ENCODE measurements at regions of chr2 and their contacts with region 1.

Region 1: GRCh38 chr2:62195421-62196277 is at the start of gene B3GNT2:
- DNase-seq: peak; percentile 89
- H3K4me3 ChIP-seq: peak within 1 kb of the TSS; percentile 83
- H3K27ac ChIP-seq: peak within 1 kb of the TSS; percentile 93
- H3K4me1 ChIP-seq: peaks cover 3% of the 10 kb centered on the region
- H3K27me3 ChIP-seq: no peaks in the 10 kb centered on the region
- CTCF ChIP-seq: no peak
- total RNA-seq, gene B3GNT2: 20.1 to 55.7 TPM

Region 2: DNA sequence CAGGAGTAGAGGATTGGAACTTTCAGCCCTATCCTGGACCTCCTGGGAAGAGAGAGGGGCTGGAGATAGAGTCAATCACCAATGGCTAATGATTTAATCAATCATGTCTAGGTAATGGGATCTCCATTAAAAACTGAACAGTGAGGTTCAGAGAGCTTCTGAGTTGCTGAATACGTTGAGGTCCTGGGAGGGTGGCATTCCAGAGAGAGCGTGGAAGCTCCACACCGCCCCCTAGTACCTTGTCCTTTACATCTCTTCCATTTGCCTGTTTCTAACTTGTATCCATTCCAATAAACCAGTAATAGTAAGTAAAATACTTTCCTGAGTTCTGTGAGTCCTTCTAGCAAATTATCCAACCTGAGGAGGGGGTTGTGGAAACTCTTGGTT is 102.0 kb after region 1 on chr2:
- intact Hi-C with region 1: loop called (anchors 5 kb)
- DNase-seq: no peak
- H3K4me3 ChIP-seq: no peak overlapping the region
- H3K27ac ChIP-seq: no peak overlapping the region
- H3K4me1 ChIP-seq: peaks cover 12% of the 10 kb centered on the region
- H3K27me3 ChIP-seq: no peaks in the 10 kb centered on the region
- CTCF ChIP-seq: no peak

Region 3: DNA sequence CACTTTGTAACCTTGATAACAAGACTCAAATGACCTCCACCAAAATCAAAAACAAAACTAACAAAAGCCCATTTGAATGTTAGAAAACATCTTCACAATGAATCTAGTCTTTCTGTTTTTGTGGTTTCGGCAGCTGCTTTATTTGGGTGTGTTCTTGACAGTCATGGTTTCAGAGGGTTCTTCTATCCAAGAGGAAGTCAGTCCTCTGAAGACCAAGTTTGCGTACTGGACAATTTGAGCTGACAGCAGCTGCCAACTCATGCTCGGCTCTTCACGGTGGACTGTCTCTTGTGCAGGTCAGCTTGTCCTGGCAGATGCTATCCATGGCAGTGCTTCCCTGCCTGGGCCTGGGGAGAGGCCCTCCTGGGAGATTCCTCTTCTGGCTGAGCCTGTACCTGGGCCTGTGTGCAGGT is 219.4 kb after region 1 on chr2:
- intact Hi-C with region 1: loop called (anchors 10 kb)
- DNase-seq: no peak
- H3K4me3 ChIP-seq: no peak overlapping the region
- H3K27ac ChIP-seq: no peak overlapping the region
- H3K4me1 ChIP-seq: no peaks in the 10 kb centered on the region
- H3K27me3 ChIP-seq: no peaks in the 10 kb centered on the region
- CTCF ChIP-seq: no peak

Region 4: DNA sequence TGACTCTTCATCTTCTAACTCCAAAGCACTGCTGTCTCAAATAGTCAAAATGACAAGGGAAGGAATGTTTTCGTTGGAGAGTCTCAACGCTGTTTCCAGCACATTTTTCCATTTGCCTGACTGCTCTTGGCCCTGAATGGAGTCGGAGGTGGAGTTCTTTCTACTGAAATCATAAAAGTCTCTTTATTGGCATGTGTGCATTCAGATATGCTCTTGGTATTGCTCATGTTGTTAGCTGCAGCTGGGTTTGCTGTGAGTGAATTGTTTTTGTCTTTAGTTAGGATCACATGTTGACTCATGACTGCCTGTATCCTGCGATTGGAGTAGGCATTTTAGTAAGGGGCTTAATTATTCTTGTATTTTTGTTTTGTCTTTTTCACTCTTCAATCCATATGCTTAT is 293.5 kb after region 1 on chr2:
- intact Hi-C with region 1: no loop called
- DNase-seq: no peak
- H3K4me3 ChIP-seq: no peak overlapping the region
- H3K27ac ChIP-seq: no peak overlapping the region
- H3K4me1 ChIP-seq: no peaks in the 10 kb centered on the region
- H3K27me3 ChIP-seq: no peaks in the 10 kb centered on the region
- CTCF ChIP-seq: no peak

Region 5: DNA sequence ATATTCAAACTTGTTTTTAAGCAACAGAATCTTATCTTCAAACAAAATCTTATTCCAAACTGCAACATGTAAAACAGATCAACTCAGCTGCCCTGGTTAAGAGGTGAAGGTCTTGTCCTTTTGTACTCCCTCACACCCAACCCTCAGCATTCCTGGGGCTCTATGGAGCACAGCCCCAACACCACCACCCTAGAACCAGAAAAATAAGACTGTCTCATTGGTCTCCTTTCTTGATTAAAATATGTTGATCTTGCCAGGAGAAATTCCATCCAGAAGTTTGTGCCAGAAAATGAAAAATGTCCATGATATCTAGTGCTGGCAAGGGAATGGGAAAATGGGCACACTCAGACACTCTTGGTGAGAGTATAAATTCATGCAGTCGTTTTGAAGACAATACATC is 372.4 kb after region 1 on chr2:
- intact Hi-C with region 1: no loop called
- DNase-seq: no peak
- H3K4me3 ChIP-seq: no peak overlapping the region
- H3K27ac ChIP-seq: no peak overlapping the region
- H3K4me1 ChIP-seq: no peaks in the 10 kb centered on the region
- H3K27me3 ChIP-seq: no peaks in the 10 kb centered on the region
- CTCF ChIP-seq: no peak